Activated B cell treated with CpG ODN at 0.5 μM for 24 hours (primary cell): ENCODE measurements at regions of chr4 and their contacts with region 1.

Region 1: GRCh38 chr4:127880764-127881562 is at the start of gene PLK4:
- DNase-seq: peak; percentile 88
- ATAC-seq: peak; percentile 97
- H3K4me3 Mint-ChIP-seq: peak within 1 kb of the TSS; percentile 94
- H3K27ac Mint-ChIP-seq: peak within 1 kb of the TSS; percentile 97
- H3K4me1 Mint-ChIP-seq: peaks cover 18% of the 10 kb centered on the region
- H3K27me3 Mint-ChIP-seq: no peaks in the 10 kb centered on the region
- CTCF ChIP-seq: no peak
- total RNA-seq, gene PLK4: 3.4 and 3.8 TPM in 2 replicates

Region 2: GRCh38 chr4:127782274-127783025 is 98.5 kb before region 1 on chr4 and contains the start of gene HSPA4L:
- CTCF ChIA-PET with region 1: no interaction called
- POLR2A ChIA-PET with region 1: no interaction called
- intact Hi-C with region 1: loop called (anchors 2 kb)
- DNase-seq: peak; percentile 44
- ATAC-seq: peak; percentile 84
- H3K4me3 Mint-ChIP-seq: peak within 1 kb of the TSS; percentile 88
- H3K27ac Mint-ChIP-seq: peak within 1 kb of the TSS; percentile 38
- H3K4me1 Mint-ChIP-seq: peaks cover 19% of the 10 kb centered on the region
- H3K27me3 Mint-ChIP-seq: peaks cover 48% of the 10 kb centered on the region
- CTCF ChIP-seq: no peak
- total RNA-seq, gene HSPA4L: 0.07 and 0.13 TPM in 2 replicates

Region 3: GRCh38 chr4:127965062-127965802 is 84.3 kb after region 1 on chr4 and contains the starts of genes ABHD18 and MFSD8:
- CTCF ChIA-PET with region 1: no interaction called
- POLR2A ChIA-PET with region 1: interaction called, 20 read pairs
- intact Hi-C with region 1: loop called (anchors 1 kb)
- DNase-seq: peak; percentile 96
- ATAC-seq: peak; percentile 96
- H3K4me3 Mint-ChIP-seq: peak within 1 kb of the TSS; percentile 98
- H3K27ac Mint-ChIP-seq: peak within 1 kb of the TSS; percentile 96
- H3K4me1 Mint-ChIP-seq: peaks cover 34% of the 10 kb centered on the region
- H3K27me3 Mint-ChIP-seq: no peaks in the 10 kb centered on the region
- CTCF ChIP-seq: no peak
- total RNA-seq, gene ABHD18: 12.8 and 13.9 TPM in 2 replicates
- total RNA-seq, gene MFSD8: 30.8 and 31.1 TPM in 2 replicates

Region 4: GRCh38 chr4:127997534-127998388 is 116.8 kb after region 1 on chr4:
- CTCF ChIA-PET with region 1: no interaction called
- POLR2A ChIA-PET with region 1: no interaction called
- intact Hi-C with region 1: loop called (anchors 1 kb)
- DNase-seq: no peak
- ATAC-seq: peak; percentile 92
- H3K4me3 Mint-ChIP-seq: peak overlapping the region; percentile 2
- H3K27ac Mint-ChIP-seq: peak overlapping the region; percentile 81
- H3K4me1 Mint-ChIP-seq: peaks cover 23% of the 10 kb centered on the region
- H3K27me3 Mint-ChIP-seq: no peaks in the 10 kb centered on the region
- CTCF ChIP-seq: no peak

Region 5: GRCh38 chr4:128060699-128061565 is 180.0 kb after region 1 on chr4 and contains the start of gene LARP1B:
- CTCF ChIA-PET with region 1: no interaction called
- POLR2A ChIA-PET with region 1: interaction called, 10 read pairs
- intact Hi-C with region 1: loop called (anchors 1 kb)
- DNase-seq: peak; percentile 95
- ATAC-seq: peak; percentile 89
- H3K4me3 Mint-ChIP-seq: peak within 1 kb of the TSS; percentile 84
- H3K27ac Mint-ChIP-seq: peak within 1 kb of the TSS; percentile 90
- H3K4me1 Mint-ChIP-seq: peaks cover 10% of the 10 kb centered on the region
- H3K27me3 Mint-ChIP-seq: no peaks in the 10 kb centered on the region
- CTCF ChIP-seq: no peak
- total RNA-seq, gene LARP1B: 10.7 and 11.5 TPM in 2 replicates

Region 6: GRCh38 chr4:128287871-128288688 is 407.1 kb after region 1 on chr4:
- CTCF ChIA-PET with region 1: no interaction called
- POLR2A ChIA-PET with region 1: no interaction called
- intact Hi-C with region 1: loop called (anchors 1 kb)
- DNase-seq: peak; percentile 97
- ATAC-seq: peak; percentile 88
- H3K4me3 Mint-ChIP-seq: peak overlapping the region; percentile 83
- H3K27ac Mint-ChIP-seq: peak overlapping the region; percentile 80
- H3K4me1 Mint-ChIP-seq: peaks cover 29% of the 10 kb centered on the region
- H3K27me3 Mint-ChIP-seq: no peaks in the 10 kb centered on the region
- CTCF ChIP-seq: no peak

Region 7: DNA sequence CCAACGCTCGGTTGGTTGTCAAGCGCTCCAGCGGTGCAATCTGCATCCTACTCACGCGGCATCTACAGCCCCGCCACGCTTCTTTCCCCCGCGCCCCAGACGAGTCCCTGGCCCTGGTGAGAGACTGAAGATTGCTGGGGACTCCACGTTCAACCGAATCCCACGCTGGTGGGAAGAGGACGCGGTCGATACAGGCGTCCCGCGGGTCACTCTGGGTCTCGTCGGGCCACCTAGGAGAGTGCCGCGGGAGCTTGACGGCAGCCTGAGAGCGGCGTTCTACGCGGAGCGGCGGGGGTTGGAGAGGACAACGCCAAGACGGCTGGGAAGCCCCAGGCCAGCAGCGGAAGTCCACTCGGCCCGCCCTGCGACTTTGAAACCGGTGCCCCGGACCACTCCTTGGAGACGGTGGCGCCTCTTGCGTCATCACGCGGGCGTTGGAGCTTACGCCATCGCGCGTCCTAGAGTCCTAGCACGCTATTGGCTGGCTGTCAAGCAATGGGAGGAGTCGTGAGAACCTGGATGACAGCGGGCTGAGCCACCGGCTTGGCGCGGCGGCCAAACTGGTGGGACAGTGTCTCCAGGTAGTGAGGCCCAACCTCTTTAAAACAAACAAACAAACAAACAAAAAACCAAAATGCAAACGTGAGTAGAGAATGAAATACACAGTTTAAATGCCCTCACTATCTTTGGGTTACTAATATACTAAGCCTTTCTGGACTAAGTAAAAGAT is 1212.4 kb after region 1 on chr4 and contains the start of gene SCLT1:
- CTCF ChIA-PET with region 1: no interaction called
- POLR2A ChIA-PET with region 1: interaction called, 3 read pairs
- intact Hi-C with region 1: loop called (anchors 1 kb)
- DNase-seq: peak; percentile 94
- ATAC-seq: peak; percentile 92
- H3K4me3 Mint-ChIP-seq: no peak within 1 kb of the TSS
- H3K27ac Mint-ChIP-seq: no peak within 1 kb of the TSS
- H3K4me1 Mint-ChIP-seq: peaks cover 45% of the 10 kb centered on the region
- H3K27me3 Mint-ChIP-seq: no peaks in the 10 kb centered on the region
- CTCF ChIP-seq: no peak
- total RNA-seq, gene SCLT1: 24.5 and 25.0 TPM in 2 replicates